ENCODE measurements at regions of chr5 and their contacts with region 1.

Region 1: DNA sequence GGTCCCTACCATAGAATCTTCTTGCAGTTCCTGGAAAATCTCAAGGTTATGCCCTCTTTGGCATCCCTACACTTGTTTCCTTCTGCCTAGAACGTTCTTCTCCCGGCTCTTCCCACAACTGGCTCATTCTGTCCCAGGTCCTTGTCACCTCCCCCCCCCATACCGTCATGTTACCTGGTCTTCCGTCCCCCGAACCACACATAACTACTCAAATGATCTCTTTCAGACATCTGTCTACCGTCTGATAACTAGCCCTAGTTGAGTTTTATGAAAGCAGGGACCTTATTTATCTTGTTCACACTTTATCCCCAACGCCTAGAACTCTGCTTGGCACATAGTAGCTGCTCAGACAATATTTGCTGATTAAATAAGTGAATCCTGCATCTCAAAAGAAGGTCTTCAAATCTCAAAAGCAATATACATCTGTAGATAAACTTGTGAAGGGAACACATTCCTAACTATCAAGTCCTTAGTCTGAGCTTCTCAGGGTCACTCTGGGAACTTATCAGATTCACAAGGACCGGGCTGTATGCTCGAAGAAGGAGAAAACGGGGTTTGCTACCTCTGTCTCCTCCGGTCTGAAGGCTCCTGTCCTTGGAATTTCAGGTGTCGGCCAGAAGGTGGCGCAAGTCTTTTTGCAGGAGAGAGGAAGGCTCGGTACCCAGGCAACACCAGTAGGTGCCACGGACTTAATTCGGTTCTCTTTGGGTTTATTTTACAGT is 30.0 kb downstream of the LCP2 start:
- DNase-seq: peak; percentile 84
- H3K4me3 ChIP-seq: peak overlapping the region in 1 of 2 experiments; percentile 53; a peak in 2 of 4 replicates
- H3K27ac ChIP-seq: no peak overlapping the region
- H3K4me1 ChIP-seq: peaks cover 0 to 10% of the 10 kb centered on the region in 2 experiments; a peak in 1 of 4 replicates
- H3K27me3 ChIP-seq: peaks cover 3% of the 10 kb centered on the region; the same call in 1 of the 2 replicates
- CTCF ChIP-seq: peak; percentile 85
- EP300 ChIP-seq: no peak
- RAD21 ChIP-seq: peak; percentile 76

Region 2: GRCh38 chr5:170247363-170247762 is 20.2 kb before region 1 on chr5:
- CTCF ChIA-PET with region 1: interaction called, 16 read pairs
- POLR2A ChIA-PET with region 1: no interaction called
- DNase-seq: no peak
- H3K4me3 ChIP-seq: no peak overlapping the region
- H3K27ac ChIP-seq: no peak overlapping the region
- H3K4me1 ChIP-seq: peaks cover 0 to 2% of the 10 kb centered on the region in 2 experiments; a peak in 2 of 4 replicates
- H3K27me3 ChIP-seq: no peaks in the 10 kb centered on the region
- CTCF ChIP-seq: no peak
- EP300 ChIP-seq: no peak
- RAD21 ChIP-seq: no peak

Region 3: DNA sequence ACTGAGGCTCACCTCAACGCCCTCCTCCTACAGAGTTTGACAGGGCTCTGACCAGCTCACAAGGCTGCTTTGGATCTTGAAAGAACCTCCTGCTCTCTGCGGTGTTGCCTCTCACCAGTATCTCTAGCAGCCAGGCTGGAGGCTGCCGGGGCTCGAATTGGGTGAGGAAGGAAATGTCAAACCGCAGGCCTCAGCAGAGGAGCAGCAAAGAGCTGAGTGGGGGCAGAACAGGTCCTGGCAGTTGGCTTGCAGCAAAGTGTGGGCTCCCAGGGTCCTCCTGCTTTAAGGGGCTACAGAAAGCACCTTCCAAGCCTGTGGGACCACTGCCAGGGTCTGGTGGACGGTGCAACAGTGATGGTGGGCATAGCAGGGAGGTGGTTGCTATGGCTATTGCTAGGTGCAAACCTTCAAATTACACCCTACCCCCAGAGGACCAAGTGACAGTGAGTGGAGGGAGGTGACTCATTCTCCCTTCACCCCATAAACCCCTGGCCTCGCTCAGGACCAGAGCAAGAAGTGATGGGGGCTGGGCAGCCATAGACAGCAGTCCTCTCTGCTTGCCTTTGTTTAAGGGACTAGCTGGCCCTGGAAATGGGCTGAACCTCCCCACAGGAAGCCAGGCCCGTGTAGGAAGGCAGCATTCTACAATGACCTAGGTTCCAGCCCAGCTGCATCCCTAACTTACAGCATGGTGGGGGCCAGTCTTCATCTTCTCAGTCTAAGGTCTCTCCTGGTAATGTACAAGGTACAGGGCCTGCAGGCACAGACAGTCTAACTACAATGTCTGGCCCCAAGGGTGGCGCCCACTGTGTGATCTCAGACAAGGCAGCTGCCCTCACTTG is 11.2 kb after region 1 on chr5:
- CTCF ChIA-PET with region 1: interaction called, 30 read pairs
- POLR2A ChIA-PET with region 1: no interaction called
- DNase-seq: no peak
- H3K4me3 ChIP-seq: no peak overlapping the region
- H3K27ac ChIP-seq: no peak overlapping the region
- H3K4me1 ChIP-seq: peaks cover 0 to 11% of the 10 kb centered on the region in 2 experiments; a peak in 1 of 4 replicates
- H3K27me3 ChIP-seq: no peaks in the 10 kb centered on the region
- CTCF ChIP-seq: no peak
- EP300 ChIP-seq: no peak
- RAD21 ChIP-seq: no peak

Region 4: GRCh38 chr5:170429014-170429413 is 161.4 kb after region 1 on chr5:
- CTCF ChIA-PET with region 1: interaction called, 16 read pairs
- POLR2A ChIA-PET with region 1: no interaction called
- DNase-seq: peak; percentile 28
- H3K4me3 ChIP-seq: no peak overlapping the region
- H3K27ac ChIP-seq: no peak overlapping the region
- H3K4me1 ChIP-seq: peaks cover 0 to 33% of the 10 kb centered on the region in 2 experiments; a peak in 2 of 4 replicates
- H3K27me3 ChIP-seq: no peaks in the 10 kb centered on the region; the same call in 1 of the 2 replicates
- CTCF ChIP-seq: peak; percentile 35
- EP300 ChIP-seq: no peak
- RAD21 ChIP-seq: no peak

Region 5: DNA sequence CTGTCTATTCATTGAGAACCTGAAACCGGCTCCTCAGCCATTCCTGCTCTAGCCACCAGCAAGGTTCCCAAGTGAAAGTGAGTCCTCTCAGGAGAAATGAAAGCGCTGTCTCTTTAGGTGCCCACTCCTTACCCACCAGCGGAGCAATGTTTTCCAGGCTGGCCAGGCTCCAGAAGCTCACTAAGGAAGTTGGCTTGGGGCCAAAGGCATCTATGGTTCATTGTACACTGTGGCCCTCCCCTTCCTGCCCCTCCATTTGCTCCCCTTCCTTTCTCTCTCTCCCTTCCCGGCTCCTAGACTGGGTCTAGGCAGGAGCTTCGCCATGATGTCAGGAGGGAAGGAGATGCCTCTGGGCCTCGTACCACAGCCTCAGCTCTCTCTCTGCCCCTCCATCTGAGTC is 514.8 kb after region 1 on chr5:
- CTCF ChIA-PET with region 1: no interaction called
- POLR2A ChIA-PET with region 1: no interaction called
- DNase-seq: no peak
- H3K4me3 ChIP-seq: no peak overlapping the region
- H3K27ac ChIP-seq: peak overlapping the region in 1 of 2 experiments; percentile 22; a peak in 1 of 4 replicates
- H3K4me1 ChIP-seq: peaks cover 0 to 29% of the 10 kb centered on the region in 2 experiments; a peak in 1 of 4 replicates
- H3K27me3 ChIP-seq: no peaks in the 10 kb centered on the region; the same call in 1 of the 2 replicates
- CTCF ChIP-seq: no peak
- EP300 ChIP-seq: no peak
- RAD21 ChIP-seq: no peak